Activated naive CD4-positive, alpha-beta T cell treated with anti-CD3 and anti-CD28 coated beads for 36 hours (primary cell): ENCODE measurements at regions of chr15 and their contacts with region 1.

Region 1: GRCh38 chr15:77186594-77187011 is 115.7 kb upstream of the TSPAN3 start:
- DNase-seq: peak; percentile 35
- H3K4me3 Mint-ChIP-seq: no peak overlapping the region
- H3K27ac Mint-ChIP-seq: no peak overlapping the region
- H3K4me1 Mint-ChIP-seq: peaks cover 52% of the 10 kb centered on the region
- H3K27me3 Mint-ChIP-seq: no peaks in the 10 kb centered on the region

Region 2: DNA sequence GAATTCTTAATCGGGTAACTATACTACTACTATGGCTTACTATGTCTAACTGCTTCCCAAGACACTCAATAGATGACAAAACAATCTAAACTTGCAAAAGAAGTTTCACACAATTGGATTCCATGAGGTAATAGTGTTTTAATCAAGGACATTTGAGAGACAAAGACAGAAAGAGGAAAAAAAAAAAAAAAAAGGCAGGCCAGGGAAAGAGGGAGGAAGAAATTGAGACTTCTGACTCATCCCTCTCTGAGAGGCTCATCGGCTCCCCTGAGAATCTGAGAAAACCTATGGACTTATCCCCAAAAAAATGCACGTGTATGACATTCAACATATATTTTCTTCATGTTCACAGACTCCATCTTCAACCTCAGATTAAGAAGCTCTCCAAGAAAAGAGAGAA is 342.5 kb before region 1 on chr15:
- CTCF ChIA-PET with region 1: no interaction called
- intact Hi-C with region 1: no loop called
- DNase-seq: no peak
- H3K4me3 Mint-ChIP-seq: no peak overlapping the region
- H3K27ac Mint-ChIP-seq: no peak overlapping the region
- H3K4me1 Mint-ChIP-seq: peaks cover 22% of the 10 kb centered on the region
- H3K27me3 Mint-ChIP-seq: no peaks in the 10 kb centered on the region

Region 3: DNA sequence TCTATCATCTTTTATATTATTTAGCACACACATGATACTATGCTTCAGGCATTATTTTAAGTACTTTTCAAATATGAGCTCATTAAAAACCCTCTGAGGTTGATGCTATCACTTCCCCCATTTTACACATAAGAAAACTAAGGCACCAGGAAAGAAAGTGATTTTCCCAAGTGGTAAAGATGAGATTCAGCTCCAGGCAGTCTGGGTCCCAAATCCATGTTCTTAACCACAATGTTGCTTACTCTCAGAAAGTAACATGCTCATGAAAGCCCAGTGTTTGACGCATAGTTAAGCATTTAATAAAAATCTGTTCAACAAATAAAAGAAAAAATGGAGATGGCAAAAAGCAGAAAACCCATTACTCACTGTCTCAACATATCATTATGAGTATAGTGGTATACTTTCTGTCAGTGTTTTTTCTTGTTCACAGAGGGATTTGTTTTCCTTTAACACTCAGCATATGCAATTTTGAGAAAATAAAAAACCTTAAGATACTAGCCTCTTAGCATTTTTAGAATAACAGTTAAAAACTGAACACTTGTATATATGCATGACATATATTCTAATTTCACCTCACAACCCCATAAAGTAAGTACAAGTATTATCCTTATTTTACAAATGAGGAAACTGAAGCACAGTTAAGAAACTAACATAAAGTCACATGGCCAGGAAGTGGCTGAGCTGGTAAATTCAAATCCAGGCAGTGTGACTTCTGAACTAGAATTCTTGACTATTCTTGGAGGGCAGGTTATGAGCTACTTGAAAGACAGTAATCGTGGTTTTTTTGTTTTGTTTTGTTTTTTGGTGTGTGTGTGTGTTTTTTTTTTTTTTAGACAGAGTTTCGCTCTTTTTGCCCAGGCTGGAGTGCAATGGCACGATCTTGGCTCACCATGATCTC is 222.9 kb after region 1 on chr15:
- CTCF ChIA-PET with region 1: interaction called, 7 read pairs
- intact Hi-C with region 1: loop called (anchors 5 kb)
- DNase-seq: peak; percentile 65
- H3K4me3 Mint-ChIP-seq: peak overlapping the region; percentile 68
- H3K27ac Mint-ChIP-seq: peak overlapping the region; percentile 86
- H3K4me1 Mint-ChIP-seq: peaks cover 38% of the 10 kb centered on the region
- H3K27me3 Mint-ChIP-seq: no peaks in the 10 kb centered on the region